Activated CD4-positive, alpha-beta memory T cell treated with anti-CD3 and anti-CD28 coated beads for 36 hours (primary cell): ENCODE measurements at regions of chr18 and their contacts with region 1.

Region 1: GRCh38 chr18:57630002-57630753 is 8.5 kb upstream of the NARS1 start:
- DNase-seq: peak; percentile 96
- H3K4me3 Mint-ChIP-seq: peak overlapping the region; percentile 82
- H3K27ac Mint-ChIP-seq: peak overlapping the region; percentile 86
- H3K4me1 Mint-ChIP-seq: peaks cover 10% of the 10 kb centered on the region
- H3K27me3 Mint-ChIP-seq: no peaks in the 10 kb centered on the region

Region 2: GRCh38 chr18:57544936-57545660 is 85.1 kb before region 1 on chr18:
- CTCF ChIA-PET with region 1: no interaction called
- POLR2A ChIA-PET with region 1: no interaction called
- intact Hi-C with region 1: no loop called
- DNase-seq: no peak
- H3K4me3 Mint-ChIP-seq: no peak overlapping the region
- H3K27ac Mint-ChIP-seq: no peak overlapping the region
- H3K4me1 Mint-ChIP-seq: peaks cover 7% of the 10 kb centered on the region
- H3K27me3 Mint-ChIP-seq: no peaks in the 10 kb centered on the region

Region 3: DNA sequence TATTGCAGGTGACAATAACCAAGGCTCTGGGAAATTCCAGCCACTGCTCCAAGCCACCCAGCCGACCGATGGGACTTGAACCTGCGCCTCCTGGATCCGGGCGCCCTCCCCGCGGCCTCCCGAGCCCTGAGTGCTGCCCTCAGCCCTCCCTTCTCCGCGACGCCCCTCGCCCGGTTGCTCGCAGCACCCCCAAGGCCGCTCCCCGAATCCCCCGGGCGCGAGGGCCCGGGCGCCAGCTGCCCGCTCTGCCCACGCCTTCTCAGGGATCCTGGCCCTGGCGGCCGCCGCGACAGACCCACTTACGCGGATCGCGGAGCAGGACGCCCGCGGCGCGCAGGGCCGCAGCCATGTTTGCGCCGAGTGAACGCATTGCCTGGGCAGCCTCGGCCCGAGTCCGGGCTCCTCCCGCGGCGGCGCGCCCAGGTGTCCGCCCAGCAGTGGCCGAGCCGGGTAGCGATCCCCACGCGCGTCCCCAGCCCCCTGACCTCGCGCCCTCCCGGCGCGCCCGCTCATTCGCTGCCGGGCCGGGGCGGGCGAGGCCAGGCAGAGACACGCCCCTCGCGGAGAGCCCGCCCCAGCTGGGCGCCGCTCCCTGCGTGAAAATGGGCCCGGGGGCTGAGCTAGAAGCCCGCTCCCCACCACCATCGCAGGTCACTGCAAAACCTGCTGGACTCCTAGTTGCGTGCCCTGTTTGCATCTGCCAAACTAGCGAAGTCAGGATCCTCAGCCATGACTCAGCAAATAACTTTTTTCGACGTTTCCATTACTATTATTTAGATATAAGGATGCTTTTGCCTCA is 43.7 kb before region 1 on chr18 and contains the start of gene FECH:
- CTCF ChIA-PET with region 1: no interaction called
- POLR2A ChIA-PET with region 1: no interaction called
- intact Hi-C with region 1: loop called (anchors 1 kb)
- DNase-seq: peak; percentile 70
- H3K4me3 Mint-ChIP-seq: peak within 1 kb of the TSS; percentile 82
- H3K27ac Mint-ChIP-seq: peak within 1 kb of the TSS; percentile 45
- H3K4me1 Mint-ChIP-seq: peaks cover 14% of the 10 kb centered on the region
- H3K27me3 Mint-ChIP-seq: no peaks in the 10 kb centered on the region
- total RNA-seq, gene FECH: 17.5 to 20.2 TPM

Region 4: GRCh38 chr18:57833443-57834101 is 203.4 kb after region 1 on chr18:
- CTCF ChIA-PET with region 1: interaction called, 3 read pairs
- POLR2A ChIA-PET with region 1: no interaction called
- intact Hi-C with region 1: loop called (anchors 2 kb)
- DNase-seq: peak; percentile 40
- H3K4me3 Mint-ChIP-seq: peak overlapping the region; percentile 21
- H3K27ac Mint-ChIP-seq: peak overlapping the region; percentile 40
- H3K4me1 Mint-ChIP-seq: peaks cover 28% of the 10 kb centered on the region
- H3K27me3 Mint-ChIP-seq: peaks cover 29% of the 10 kb centered on the region